Endothelial cell of umbilical vein (primary cell): ENCODE measurements at regions of chr19 and their contacts with region 1.

Region 1: GRCh38 chr19:44689056-44689895 is 9.7 kb upstream of the CEACAM16 start:
- DNase-seq: peak; percentile 70
- H3K4me3 ChIP-seq: no peak overlapping the region
- H3K27ac ChIP-seq: no peak overlapping the region
- H3K4me1 ChIP-seq: peaks cover 30% of the 10 kb centered on the region
- H3K27me3 ChIP-seq: no peaks in the 10 kb centered on the region
- CTCF ChIP-seq: peak; percentile 79 to 96
- POLR2A ChIP-seq: no peak

Region 2: DNA sequence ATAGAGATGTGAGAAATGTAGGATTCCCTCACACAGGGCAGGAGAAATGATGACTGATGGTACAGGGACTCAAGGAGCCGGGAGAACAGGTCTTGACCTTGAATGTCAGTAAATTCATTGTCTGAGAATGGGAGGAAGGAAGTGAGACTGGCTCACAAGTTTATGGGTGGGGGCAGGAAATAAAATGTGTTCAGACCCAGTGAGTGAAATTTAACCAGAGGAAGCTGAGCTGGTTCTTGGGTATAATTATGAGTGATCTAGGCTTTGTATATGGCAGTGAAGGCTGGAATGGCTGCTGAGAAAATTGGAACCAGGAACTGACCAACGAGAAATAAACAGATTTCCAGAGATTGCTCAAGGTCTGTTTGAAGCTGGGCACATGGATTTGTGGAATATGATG is 82.2 kb before region 1 on chr19:
- CTCF ChIA-PET with region 1: no interaction called
- POLR2A ChIA-PET with region 1: no interaction called
- dilution Hi-C with region 1: no loop called
- intact Hi-C with region 1: loop called (anchors 1 kb)
- DNase-seq: peak; percentile 95
- H3K4me3 ChIP-seq: no peak overlapping the region
- H3K27ac ChIP-seq: peak overlapping the region; percentile 93
- H3K4me1 ChIP-seq: peaks cover 62% of the 10 kb centered on the region
- H3K27me3 ChIP-seq: no peaks in the 10 kb centered on the region
- CTCF ChIP-seq: no peak
- POLR2A ChIP-seq: peak; percentile 63

Region 3: GRCh38 chr19:44718441-44719261 is 29.4 kb after region 1 on chr19:
- CTCF ChIA-PET with region 1: interaction called, 239 read pairs
- POLR2A ChIA-PET with region 1: interaction called, 3 read pairs
- dilution Hi-C with region 1: no loop called
- intact Hi-C with region 1: loop called (anchors 1 kb)
- DNase-seq: peak; percentile 98
- H3K4me3 ChIP-seq: peak overlapping the region; percentile 11 to 72 (median 26)
- H3K27ac ChIP-seq: peak overlapping the region; percentile 100
- H3K4me1 ChIP-seq: peaks cover 38% of the 10 kb centered on the region
- H3K27me3 ChIP-seq: no peaks in the 10 kb centered on the region
- CTCF ChIP-seq: no peak
- POLR2A ChIP-seq: no peak

Region 4: GRCh38 chr19:44764975-44765948 is 76.0 kb after region 1 on chr19:
- CTCF ChIA-PET with region 1: interaction called, 166 read pairs
- POLR2A ChIA-PET with region 1: interaction called, 11 read pairs
- dilution Hi-C with region 1: no loop called
- intact Hi-C with region 1: loop called (anchors 1 kb)
- DNase-seq: no peak
- H3K4me3 ChIP-seq: no peak overlapping the region
- H3K27ac ChIP-seq: no peak overlapping the region
- H3K4me1 ChIP-seq: peaks cover 3% of the 10 kb centered on the region
- H3K27me3 ChIP-seq: no peaks in the 10 kb centered on the region
- CTCF ChIP-seq: no peak
- POLR2A ChIP-seq: no peak

Region 5: GRCh38 chr19:44808463-44809371 is 119.4 kb after region 1 on chr19 and contains the start of gene BCAM:
- CTCF ChIA-PET with region 1: interaction called, 9 read pairs
- POLR2A ChIA-PET with region 1: no interaction called
- dilution Hi-C with region 1: no loop called
- intact Hi-C with region 1: loop called (anchors 1 kb)
- DNase-seq: peak; percentile 49
- H3K4me3 ChIP-seq: peak within 1 kb of the TSS; percentile 60 to 66 (median 64)
- H3K27ac ChIP-seq: no peak within 1 kb of the TSS
- H3K4me1 ChIP-seq: peaks cover 16% of the 10 kb centered on the region
- H3K27me3 ChIP-seq: no peaks in the 10 kb centered on the region
- CTCF ChIP-seq: no peak
- POLR2A ChIP-seq: peak; percentile 68
- total RNA-seq, gene BCAM: 28.5 and 29.0 TPM in 2 replicates